Esophagus squamous epithelium (tissue), 5 donors: ENCODE measurements at regions of chr15 and their contacts with region 1.

Region 1: GRCh38 chr15:57561041-57561711 is 30.5 kb upstream of the MYZAP start:
- DNase-seq: peak; percentile 16
- H3K4me3 ChIP-seq: peak overlapping the region in 1 of 4 donors; percentile 3
- H3K27ac ChIP-seq: peak overlapping the region in 2 of 4 donors; percentile 51 to 57
- H3K4me1 ChIP-seq: peaks cover 0 to 23% (median 0%) of the 10 kb centered on the region in 3 donors
- H3K27me3 ChIP-seq: no peaks in the 10 kb centered on the region
- CTCF ChIP-seq: peak; percentile 61 to 93 (median 90)
- POLR2A ChIP-seq: no peak

Region 2: DNA sequence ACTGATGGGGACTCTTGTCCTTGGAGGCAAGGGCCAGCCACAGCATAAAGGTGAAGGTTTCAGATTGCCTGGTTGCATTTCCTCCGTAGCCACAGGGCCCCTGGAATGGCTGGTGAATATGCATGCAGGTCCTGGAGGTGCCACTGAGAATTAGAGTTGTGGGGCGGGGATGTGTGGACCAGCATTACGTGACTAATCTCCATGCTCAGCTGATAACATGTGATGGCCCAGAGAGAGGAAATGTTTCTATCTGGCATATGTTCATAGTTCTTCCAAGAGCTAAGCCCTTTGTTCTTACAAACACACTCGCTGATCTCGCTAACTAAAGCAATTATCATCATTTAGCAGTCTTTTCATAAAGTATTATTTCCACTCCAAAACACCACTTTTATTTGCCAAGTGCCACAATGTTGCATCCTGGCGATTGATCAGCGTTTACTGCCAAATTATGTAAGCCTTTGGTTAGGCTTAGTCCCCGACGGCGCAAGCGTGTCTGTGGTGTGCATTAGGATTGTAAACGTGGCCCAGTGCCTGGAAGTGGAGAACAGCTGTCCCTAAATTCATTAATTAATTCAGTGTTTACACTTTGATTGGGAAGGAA is 128.9 kb before region 1 on chr15:
- intact Hi-C with region 1: no loop called
- DNase-seq: no peak
- H3K4me3 ChIP-seq: no peak overlapping the region
- H3K27ac ChIP-seq: peak overlapping the region in 2 of 4 donors; percentile 15 to 37
- H3K4me1 ChIP-seq: peaks cover 0 to 7% (median 0%) of the 10 kb centered on the region in 3 donors
- H3K27me3 ChIP-seq: peaks cover 0 to 4% (median 0%) of the 10 kb centered on the region in 4 donors
- CTCF ChIP-seq: no peak
- POLR2A ChIP-seq: no peak

Region 3: GRCh38 chr15:57496946-57497869 is 64.0 kb before region 1 on chr15:
- intact Hi-C with region 1: no loop called
- DNase-seq: no peak
- H3K4me3 ChIP-seq: no peak overlapping the region
- H3K27ac ChIP-seq: peak overlapping the region in 2 of 4 donors; percentile 23 to 41
- H3K4me1 ChIP-seq: peaks cover 0 to 21% (median 0%) of the 10 kb centered on the region in 3 donors
- H3K27me3 ChIP-seq: no peaks in the 10 kb centered on the region
- CTCF ChIP-seq: no peak
- POLR2A ChIP-seq: no peak

Region 4: GRCh38 chr15:57611938-57612337 is 50.8 kb after region 1 on chr15:
- intact Hi-C with region 1: loop called (anchors 2 kb)
- DNase-seq: no peak
- H3K4me3 ChIP-seq: no peak overlapping the region
- H3K27ac ChIP-seq: peak overlapping the region in 3 of 4 donors; percentile 66 to 74 (median 69)
- H3K4me1 ChIP-seq: peaks cover 9 to 56% (median 27%) of the 10 kb centered on the region in 3 donors
- H3K27me3 ChIP-seq: no peaks in the 10 kb centered on the region
- CTCF ChIP-seq: peak; percentile 18 to 81 (median 60)
- POLR2A ChIP-seq: no peak